ENCODE measurements at regions of chr10 and their contacts with region 1.

Region 1: DNA sequence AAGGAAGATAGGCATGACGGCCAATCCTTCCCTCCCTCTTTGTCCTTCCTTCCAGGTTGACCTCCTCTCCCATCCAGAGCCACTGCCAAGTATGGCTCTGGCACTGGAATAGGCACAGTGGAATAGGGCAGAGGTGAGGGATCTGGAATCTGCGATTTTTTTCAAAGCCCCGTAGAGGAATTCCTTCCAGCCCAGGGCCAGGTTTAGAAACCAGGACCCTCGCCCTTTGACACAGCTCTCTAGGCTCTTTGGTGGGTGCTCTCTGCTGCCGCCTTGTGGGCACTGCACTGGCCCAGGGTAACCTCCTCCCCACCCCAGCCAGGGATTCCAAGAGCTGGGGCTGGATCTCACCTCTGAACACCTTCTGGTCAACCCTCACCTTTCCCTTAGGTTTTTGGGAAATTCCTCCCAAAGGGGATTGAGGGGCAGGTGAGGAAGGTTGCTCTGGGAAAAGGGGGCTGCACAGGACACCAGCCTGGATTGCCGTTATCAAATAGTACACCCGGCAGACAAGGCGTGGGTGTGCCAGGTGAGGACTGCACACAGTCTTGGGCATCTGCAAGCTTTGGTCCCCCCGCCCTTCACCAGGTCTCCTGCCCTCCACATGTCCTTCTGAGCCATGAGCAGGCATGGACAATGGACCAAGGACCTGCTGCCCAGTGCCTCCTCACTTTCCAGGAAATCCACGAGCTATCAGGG is 22.8 kb downstream of the C10orf105 start:
- DNase-seq: peak; percentile 54
- H3K4me3 ChIP-seq: no peak overlapping the region
- H3K27ac ChIP-seq: no peak overlapping the region
- H3K4me1 ChIP-seq: no peaks in the 10 kb centered on the region
- H3K27me3 ChIP-seq: no peaks in the 10 kb centered on the region
- CTCF ChIP-seq: peak; percentile 85

Region 2: DNA sequence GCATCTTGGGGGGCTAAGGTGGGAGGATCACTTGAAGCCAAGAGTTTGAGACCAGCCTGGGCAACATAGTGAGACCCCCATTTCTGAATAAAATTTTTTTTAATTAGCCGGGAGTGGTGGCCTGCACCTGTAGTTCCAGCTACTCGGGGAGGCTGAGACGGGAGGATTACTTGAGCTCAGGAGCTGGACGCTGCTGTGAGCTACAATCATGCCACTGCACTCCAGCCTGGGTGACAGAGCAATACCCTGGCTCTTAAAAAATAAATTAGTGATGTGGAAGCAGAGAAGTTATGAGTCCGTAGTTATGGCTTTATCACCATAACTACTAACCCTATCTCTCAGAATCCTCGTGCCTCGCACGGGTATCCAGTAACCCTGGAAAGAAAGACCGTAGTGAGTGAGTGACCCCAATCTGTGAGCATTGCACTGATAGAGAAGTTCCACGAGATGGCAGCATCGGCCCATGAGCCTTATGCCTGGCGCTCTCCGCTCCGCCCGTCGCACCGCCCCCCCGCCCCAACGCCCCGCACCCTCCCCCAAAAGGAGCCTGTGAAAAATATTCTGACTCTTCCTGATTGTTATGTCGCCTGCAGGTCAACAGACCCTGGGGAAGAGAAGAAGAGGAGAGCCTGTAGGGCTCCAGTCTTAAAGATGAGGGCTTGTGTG is 382.6 kb before region 1 on chr10:
- CTCF ChIA-PET with region 1: interaction called, 14 read pairs
- POLR2A ChIA-PET with region 1: no interaction called
- intact Hi-C with region 1: loop called (anchors 2 kb)
- DNase-seq: peak; percentile 60
- H3K4me3 ChIP-seq: no peak overlapping the region
- H3K27ac ChIP-seq: no peak overlapping the region
- H3K4me1 ChIP-seq: peaks cover 8% of the 10 kb centered on the region
- H3K27me3 ChIP-seq: no peaks in the 10 kb centered on the region
- CTCF ChIP-seq: peak; percentile 66

Region 3: GRCh38 chr10:71396084-71396720 is 300.6 kb before region 1 on chr10:
- CTCF ChIA-PET with region 1: interaction called, 11 read pairs
- POLR2A ChIA-PET with region 1: interaction called, 3 read pairs
- intact Hi-C with region 1: loop called (anchors 5 kb)
- DNase-seq: peak; percentile 86
- H3K4me3 ChIP-seq: peak overlapping the region; percentile 67
- H3K27ac ChIP-seq: peak overlapping the region; percentile 63
- H3K4me1 ChIP-seq: peaks cover 10% of the 10 kb centered on the region
- H3K27me3 ChIP-seq: no peaks in the 10 kb centered on the region
- CTCF ChIP-seq: peak; percentile 71

Region 4: DNA sequence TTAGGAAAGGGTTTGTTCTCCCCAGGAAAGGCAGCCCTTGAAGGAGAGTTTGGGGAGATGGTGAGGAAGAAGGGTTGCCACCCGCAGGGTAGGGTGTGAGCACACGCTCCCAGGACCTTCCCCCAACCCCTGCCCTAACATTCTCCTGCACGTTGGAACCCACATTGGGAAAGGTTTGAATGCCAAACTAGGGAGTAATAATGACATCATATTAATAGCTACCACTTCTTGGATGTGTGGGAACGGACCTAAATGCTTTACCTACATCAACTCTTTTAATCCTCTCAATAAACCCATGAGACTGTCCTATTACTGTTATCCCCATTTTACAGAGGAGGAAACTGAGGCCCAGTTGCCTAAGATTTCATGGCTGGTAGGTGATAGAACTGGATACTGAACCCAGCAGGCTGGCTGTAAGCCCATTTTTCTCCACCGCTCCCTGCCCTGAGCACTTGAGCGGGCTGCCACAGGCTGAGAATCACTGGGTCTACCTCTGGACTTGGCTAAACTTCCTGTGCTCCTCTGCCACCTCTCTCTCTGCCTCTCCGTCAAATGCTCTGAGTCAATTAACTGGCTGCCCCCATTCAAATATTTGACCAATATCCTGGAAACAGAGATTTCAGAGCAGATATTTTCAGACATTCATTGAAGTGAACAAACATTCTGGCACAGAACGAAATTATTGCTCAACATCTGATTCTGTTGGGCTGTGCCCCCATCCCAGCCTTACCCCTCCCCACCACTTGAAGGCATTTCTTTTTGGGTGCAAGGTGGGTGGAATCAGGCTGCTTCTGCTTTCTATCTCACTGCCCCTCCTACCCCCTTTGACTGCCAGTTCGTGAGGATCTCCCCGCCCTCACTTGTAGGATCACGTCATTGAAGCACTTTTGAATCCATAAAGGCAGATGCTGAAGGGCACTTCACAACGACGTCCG is 106.9 kb before region 1 on chr10:
- CTCF ChIA-PET with region 1: no interaction called
- POLR2A ChIA-PET with region 1: no interaction called
- intact Hi-C with region 1: no loop called
- DNase-seq: no peak
- H3K4me3 ChIP-seq: no peak overlapping the region
- H3K27ac ChIP-seq: no peak overlapping the region
- H3K4me1 ChIP-seq: peaks cover 24% of the 10 kb centered on the region
- H3K27me3 ChIP-seq: no peaks in the 10 kb centered on the region
- CTCF ChIP-seq: no peak